ENCODE measurements at regions of chr10 and their contacts with region 1.

Region 1: DNA sequence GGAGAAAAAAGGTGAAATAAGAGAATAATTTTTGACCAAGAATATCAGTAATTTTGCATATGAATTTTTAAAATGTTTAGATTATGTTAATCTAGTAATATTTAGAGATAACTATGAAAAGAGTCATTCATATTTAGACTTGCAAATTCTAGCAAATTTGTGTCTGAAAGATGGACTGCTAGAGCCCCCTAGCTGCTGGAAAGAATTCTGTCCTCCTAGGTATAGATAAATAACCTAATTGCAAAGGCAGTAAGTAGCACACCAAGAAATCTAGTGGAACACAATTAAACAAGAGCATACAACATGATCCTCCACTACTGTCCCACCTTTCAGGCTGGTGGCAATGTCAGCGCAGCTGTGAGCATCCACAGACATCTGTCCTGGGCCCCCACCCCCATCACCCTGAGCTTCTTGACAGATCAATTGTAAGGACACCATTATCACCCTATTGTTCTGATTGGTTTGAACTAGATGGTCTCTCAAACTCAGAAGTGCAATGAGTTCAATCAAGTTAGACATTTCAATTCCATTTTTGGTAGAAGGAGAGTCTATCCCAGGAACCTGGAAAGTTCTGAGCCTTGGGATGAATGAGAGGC is 15.0 kb upstream of the GFRA1 start:
- DNase-seq: peak; percentile 13
- ATAC-seq: peak; percentile 72; the same call in 1 of the 2 replicates
- H3K4me3 ChIP-seq: no peak overlapping the region
- H3K27ac ChIP-seq: no peak overlapping the region
- H3K4me1 ChIP-seq: no peaks in the 10 kb centered on the region
- H3K27me3 ChIP-seq: no peaks in the 10 kb centered on the region; the same call in 1 of the 2 replicates
- CTCF ChIP-seq: peak; percentile 84

Region 2: GRCh38 chr10:115171392-115171960 is 1116.5 kb before region 1 on chr10:
- CTCF ChIA-PET with region 1: no interaction called
- POLR2A ChIA-PET with region 1: no interaction called
- in situ Hi-C with region 1: no loop called
- intact Hi-C with region 1: loop called (anchors 10 kb)
- DNase-seq: no peak
- ATAC-seq: no peak; the same call in 1 of the 2 replicates
- H3K4me3 ChIP-seq: no peak overlapping the region
- H3K27ac ChIP-seq: no peak overlapping the region
- H3K4me1 ChIP-seq: no peaks in the 10 kb centered on the region
- H3K27me3 ChIP-seq: no peaks in the 10 kb centered on the region
- CTCF ChIP-seq: peak; percentile 48; the same call in 1 of the 2 replicates

Region 3: GRCh38 chr10:115355162-115355760 is 932.7 kb before region 1 on chr10:
- CTCF ChIA-PET with region 1: no interaction called
- POLR2A ChIA-PET with region 1: no interaction called
- in situ Hi-C with region 1: no loop called
- intact Hi-C with region 1: loop called (anchors 5 kb)
- DNase-seq: peak; percentile 47
- ATAC-seq: peak; percentile 94
- H3K4me3 ChIP-seq: no peak overlapping the region
- H3K27ac ChIP-seq: no peak overlapping the region
- H3K4me1 ChIP-seq: no peaks in the 10 kb centered on the region
- H3K27me3 ChIP-seq: no peaks in the 10 kb centered on the region
- CTCF ChIP-seq: peak; percentile 86

Region 4: GRCh38 chr10:115432188-115432775 is 855.7 kb before region 1 on chr10:
- CTCF ChIA-PET with region 1: interaction called, 3 read pairs
- POLR2A ChIA-PET with region 1: no interaction called
- in situ Hi-C with region 1: no loop called
- intact Hi-C with region 1: loop called (anchors 5 kb)
- DNase-seq: no peak
- ATAC-seq: 0 out of 2 replicates have a peak, but pooled peaks have one; percentile 65
- H3K4me3 ChIP-seq: no peak overlapping the region
- H3K27ac ChIP-seq: no peak overlapping the region
- H3K4me1 ChIP-seq: no peaks in the 10 kb centered on the region
- H3K27me3 ChIP-seq: no peaks in the 10 kb centered on the region
- CTCF ChIP-seq: peak; percentile 68; the same call in 1 of the 2 replicates

Region 5: GRCh38 chr10:115706026-115706781 is 581.8 kb before region 1 on chr10:
- CTCF ChIA-PET with region 1: no interaction called
- POLR2A ChIA-PET with region 1: no interaction called
- in situ Hi-C with region 1: no loop called
- intact Hi-C with region 1: loop called (anchors 1 kb)
- DNase-seq: peak; percentile 8
- ATAC-seq: no peak; the same call in 1 of the 2 replicates
- H3K4me3 ChIP-seq: no peak overlapping the region
- H3K27ac ChIP-seq: no peak overlapping the region
- H3K4me1 ChIP-seq: no peaks in the 10 kb centered on the region
- H3K27me3 ChIP-seq: no peaks in the 10 kb centered on the region
- CTCF ChIP-seq: peak; percentile 68; the same call in 1 of the 2 replicates

Region 6: DNA sequence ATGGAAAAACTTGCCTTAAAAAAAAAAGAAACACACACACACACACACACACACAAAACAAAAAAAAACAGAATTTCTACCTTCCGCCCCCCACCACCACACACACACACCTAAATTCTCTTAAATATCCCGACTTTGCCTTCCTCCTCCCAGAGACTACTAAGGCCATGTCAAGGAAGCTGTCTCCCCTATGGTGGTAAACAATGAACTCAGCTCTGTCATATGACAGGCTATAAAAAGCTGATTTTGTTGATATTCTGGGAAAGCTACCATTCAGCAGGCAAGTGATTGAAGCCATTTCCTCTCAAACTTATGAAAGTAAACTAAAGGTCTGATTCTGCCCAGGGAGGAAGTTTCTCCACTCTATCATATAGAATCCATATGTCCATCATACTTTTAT is 486.0 kb before region 1 on chr10:
- CTCF ChIA-PET with region 1: no interaction called
- POLR2A ChIA-PET with region 1: no interaction called
- in situ Hi-C with region 1: no loop called
- intact Hi-C with region 1: loop called (anchors 2 kb)
- DNase-seq: no peak
- ATAC-seq: no peak
- H3K4me3 ChIP-seq: no peak overlapping the region
- H3K27ac ChIP-seq: no peak overlapping the region
- H3K4me1 ChIP-seq: no peaks in the 10 kb centered on the region
- H3K27me3 ChIP-seq: no peaks in the 10 kb centered on the region
- CTCF ChIP-seq: no peak

Region 7: DNA sequence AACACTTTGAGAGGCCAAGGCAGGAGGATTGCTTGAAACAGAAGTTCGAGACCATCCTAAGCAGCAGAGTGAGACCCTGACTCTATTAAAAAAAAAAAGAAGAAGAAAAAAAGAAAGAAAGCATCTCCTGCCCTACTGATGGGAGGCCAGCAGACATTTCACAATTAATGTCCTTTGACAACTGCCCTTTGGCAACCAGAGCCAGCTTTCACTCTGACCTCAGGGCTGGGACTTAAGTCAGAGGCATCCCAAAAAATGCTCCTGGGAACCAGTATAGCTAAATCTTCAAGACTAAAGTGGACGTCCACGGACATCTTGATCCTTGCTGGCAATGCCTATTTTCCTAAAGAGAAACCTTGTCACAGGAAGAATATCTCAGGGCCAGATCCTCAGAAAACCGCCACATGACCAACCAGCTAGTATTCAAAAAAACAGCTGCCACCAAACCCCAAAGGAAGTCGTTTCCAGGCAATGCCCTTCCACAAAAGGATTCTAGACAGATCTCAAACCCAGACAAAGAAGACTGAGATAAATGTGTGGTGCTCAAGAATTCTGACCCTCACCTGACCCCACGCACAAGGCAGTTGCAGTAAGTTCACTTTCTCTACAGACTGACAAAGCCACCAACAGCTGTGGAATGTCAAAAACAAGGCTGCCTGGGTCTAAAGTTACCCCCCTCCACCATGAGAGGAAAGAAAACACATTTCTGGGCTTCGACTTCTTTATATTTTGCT is 33.4 kb before region 1 on chr10:
- CTCF ChIA-PET with region 1: no interaction called
- POLR2A ChIA-PET with region 1: no interaction called
- in situ Hi-C with region 1: no loop called
- intact Hi-C with region 1: no loop called
- DNase-seq: no peak
- ATAC-seq: no peak
- H3K4me3 ChIP-seq: no peak overlapping the region
- H3K27ac ChIP-seq: no peak overlapping the region
- H3K4me1 ChIP-seq: no peaks in the 10 kb centered on the region
- H3K27me3 ChIP-seq: peaks cover 3% of the 10 kb centered on the region
- CTCF ChIP-seq: no peak

Region 8: DNA sequence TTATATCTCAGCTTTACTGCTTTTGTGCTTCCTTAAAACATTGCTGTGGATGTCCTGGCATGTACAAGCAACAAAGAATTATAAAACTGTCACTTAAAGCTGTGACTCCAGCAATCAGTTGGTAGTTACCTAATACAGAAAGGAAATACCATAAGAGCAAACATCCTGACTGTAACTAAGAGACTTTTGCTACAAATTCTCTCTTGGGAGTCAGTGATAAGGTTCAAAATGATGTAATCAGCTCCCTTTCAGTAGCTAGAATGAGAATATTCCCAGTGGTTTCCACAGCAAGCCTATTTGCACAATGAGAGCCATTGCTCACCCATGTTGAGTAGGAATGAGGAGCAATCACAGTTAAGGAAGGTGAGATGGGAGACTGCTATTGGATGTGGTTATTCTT is 310.3 kb after region 1 on chr10:
- CTCF ChIA-PET with region 1: interaction called, 19 read pairs
- POLR2A ChIA-PET with region 1: no interaction called
- in situ Hi-C with region 1: no loop called
- intact Hi-C with region 1: no loop called
- DNase-seq: no peak
- ATAC-seq: no peak
- H3K4me3 ChIP-seq: no peak overlapping the region
- H3K27ac ChIP-seq: no peak overlapping the region
- H3K4me1 ChIP-seq: no peaks in the 10 kb centered on the region
- H3K27me3 ChIP-seq: peaks cover 12% of the 10 kb centered on the region
- CTCF ChIP-seq: no peak